IMR-90 (cell line): ENCODE measurements at regions of chr20 and their contacts with region 1.

Region 1: DNA sequence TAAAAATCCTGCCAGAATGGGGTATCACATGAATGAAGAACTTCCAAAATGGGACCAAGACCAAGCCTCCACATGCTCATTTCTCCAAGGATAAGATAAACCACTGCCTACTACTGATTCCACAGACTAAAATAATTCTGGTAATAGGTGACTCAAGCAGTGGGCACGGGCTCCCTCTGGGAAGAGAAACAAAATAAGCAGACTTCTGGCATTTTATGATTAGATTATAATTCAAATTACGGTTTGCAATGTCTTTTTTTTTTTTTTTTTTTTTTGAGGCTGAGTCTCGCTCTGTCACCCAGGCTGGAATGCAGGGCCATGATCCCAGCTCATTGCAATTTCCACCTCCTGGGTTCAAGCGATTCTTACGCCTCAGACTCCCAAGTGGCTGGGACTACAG is 16.0 kb downstream of the UQCC1 start:
- DNase-seq: peak; percentile 81
- ATAC-seq: peak; percentile 88
- H3K4me3 ChIP-seq: no peak overlapping the region
- H3K27ac ChIP-seq: peak overlapping the region; percentile 27; the same call in 1 of the 2 replicates
- H3K4me1 ChIP-seq: peaks cover 8% of the 10 kb centered on the region
- H3K27me3 ChIP-seq: no peaks in the 10 kb centered on the region
- CTCF ChIP-seq: peak; percentile 38; the same call in 1 of the 2 replicates
- POLR2A ChIP-seq: no peak
- RAD21 ChIP-seq: peak; percentile 43

Region 2: DNA sequence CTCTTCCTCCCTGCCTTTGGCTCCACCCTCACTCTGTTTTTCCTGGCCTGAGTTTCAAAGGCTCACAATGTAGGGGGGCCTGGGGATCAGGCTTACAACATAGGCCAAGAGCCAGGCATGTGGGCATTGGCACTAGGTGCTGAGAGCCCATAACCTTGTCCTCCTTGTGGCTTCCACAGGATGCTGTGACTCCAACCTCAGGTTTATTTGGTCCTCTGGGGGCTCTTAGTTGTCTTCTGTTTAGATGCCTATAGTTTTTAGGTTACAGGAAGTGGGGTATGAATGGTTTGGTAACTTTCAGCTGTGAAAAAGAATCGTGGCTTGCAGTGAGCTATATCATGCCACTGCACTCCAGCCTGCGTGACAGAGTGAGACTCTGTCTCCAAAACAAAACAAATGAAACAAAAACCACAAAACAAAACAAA is 143.7 kb before region 1 on chr20:
- CTCF ChIA-PET with region 1: no interaction called
- POLR2A ChIA-PET with region 1: no interaction called
- dilution Hi-C with region 1: no loop called
- in situ Hi-C with region 1: no loop called
- intact Hi-C with region 1: no loop called
- DNase-seq: no peak
- ATAC-seq: no peak; the same call in 1 of the 2 replicates
- H3K4me3 ChIP-seq: no peak overlapping the region
- H3K27ac ChIP-seq: no peak overlapping the region
- H3K4me1 ChIP-seq: peaks cover 5% of the 10 kb centered on the region; the same call in 1 of the 2 replicates
- H3K27me3 ChIP-seq: no peaks in the 10 kb centered on the region
- CTCF ChIP-seq: no peak
- POLR2A ChIP-seq: no peak
- RAD21 ChIP-seq: no peak

Region 3: GRCh38 chr20:35353646-35354045 is 42.1 kb before region 1 on chr20:
- CTCF ChIA-PET with region 1: no interaction called
- POLR2A ChIA-PET with region 1: no interaction called
- dilution Hi-C with region 1: no loop called
- in situ Hi-C with region 1: no loop called
- intact Hi-C with region 1: loop called (anchors 5 kb)
- DNase-seq: peak; percentile 69
- ATAC-seq: peak; percentile 76
- H3K4me3 ChIP-seq: no peak overlapping the region
- H3K27ac ChIP-seq: peak overlapping the region; percentile 49; the same call in 1 of the 2 replicates
- H3K4me1 ChIP-seq: peaks cover 7% of the 10 kb centered on the region
- H3K27me3 ChIP-seq: no peaks in the 10 kb centered on the region
- CTCF ChIP-seq: no peak
- POLR2A ChIP-seq: no peak
- RAD21 ChIP-seq: no peak